ENCODE measurements at regions of chr12 and their contacts with region 1.

Region 1: GRCh38 chr12:112992541-112993398 is 14.5 kb downstream of the OAS2 start:
- DNase-seq: peak; percentile 84
- H3K4me3 Mint-ChIP-seq: no peak overlapping the region
- H3K27ac Mint-ChIP-seq: no peak overlapping the region
- H3K4me1 Mint-ChIP-seq: peaks cover 31% of the 10 kb centered on the region
- H3K27me3 Mint-ChIP-seq: no peaks in the 10 kb centered on the region

Region 2: DNA sequence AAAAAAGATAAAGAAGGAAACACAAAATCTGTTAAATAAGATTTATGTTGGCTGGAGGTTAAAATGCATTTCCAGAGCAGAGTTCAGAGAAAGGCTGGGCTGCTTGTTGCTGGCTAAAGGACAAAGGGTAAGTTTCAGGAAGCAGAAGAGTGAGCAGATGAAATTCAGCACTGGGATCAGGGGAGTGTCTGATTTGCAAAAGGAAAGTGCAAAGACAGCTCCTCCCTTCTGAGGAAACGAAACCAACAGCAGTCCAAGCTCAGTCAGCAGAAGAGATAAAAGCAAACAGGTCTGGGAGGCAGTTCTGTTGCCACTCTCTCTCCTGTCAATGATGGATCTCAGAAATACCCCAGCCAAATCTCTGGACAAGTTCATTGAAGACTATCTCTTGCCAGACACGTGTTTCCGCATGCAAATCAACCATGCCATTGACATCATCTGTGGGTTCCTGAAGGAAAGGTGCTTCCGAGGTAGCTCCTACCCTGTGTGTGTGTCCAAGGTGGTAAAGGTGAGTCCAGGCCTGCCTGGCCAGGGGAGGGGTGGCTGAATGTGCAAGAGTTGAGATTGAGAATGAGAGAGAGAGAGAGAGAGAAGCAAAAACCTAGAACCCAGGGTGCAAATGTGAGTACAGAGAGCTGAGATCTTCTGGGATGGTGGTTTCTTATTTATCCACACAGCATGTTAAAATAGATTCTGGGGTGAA is 85.9 kb before region 1 on chr12 and contains the start of gene OAS1:
- CTCF ChIA-PET with region 1: interaction called, 55 read pairs
- POLR2A ChIA-PET with region 1: interaction called, 5 read pairs
- intact Hi-C with region 1: no loop called
- DNase-seq: peak; percentile 58
- H3K4me3 Mint-ChIP-seq: peak within 1 kb of the TSS; percentile 89
- H3K27ac Mint-ChIP-seq: peak within 1 kb of the TSS; percentile 89
- H3K4me1 Mint-ChIP-seq: peaks cover 58% of the 10 kb centered on the region
- H3K27me3 Mint-ChIP-seq: no peaks in the 10 kb centered on the region
- total RNA-seq, gene OAS1: 46.0 to 49.1 TPM

Region 3: DNA sequence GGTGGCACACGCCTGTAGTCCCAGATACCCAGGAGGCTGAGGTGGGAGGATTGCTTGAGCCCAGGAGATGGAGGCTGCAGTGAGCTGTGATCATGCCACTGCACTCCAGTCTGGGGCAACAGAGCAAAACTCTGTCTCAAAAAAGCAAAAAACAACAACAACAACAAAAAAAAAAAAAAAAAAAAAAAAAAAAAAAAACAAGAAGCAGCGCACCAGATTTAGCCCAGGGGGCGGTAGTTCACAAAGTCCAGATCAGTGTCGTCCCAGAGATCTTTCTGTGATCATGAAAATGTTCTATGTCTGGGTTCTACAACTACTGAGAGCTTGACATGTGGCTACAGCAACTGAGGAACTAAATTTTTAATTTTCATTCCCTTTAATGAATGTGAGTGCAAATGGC is 13.0 kb after region 1 on chr12:
- CTCF ChIA-PET with region 1: interaction called, 73 read pairs
- POLR2A ChIA-PET with region 1: no interaction called
- intact Hi-C with region 1: no loop called
- DNase-seq: no peak
- H3K4me3 Mint-ChIP-seq: no peak overlapping the region
- H3K27ac Mint-ChIP-seq: no peak overlapping the region
- H3K4me1 Mint-ChIP-seq: no peaks in the 10 kb centered on the region
- H3K27me3 Mint-ChIP-seq: no peaks in the 10 kb centered on the region

Region 4: GRCh38 chr12:113048716-113049127 is 56.0 kb after region 1 on chr12:
- CTCF ChIA-PET with region 1: interaction called, 12 read pairs
- POLR2A ChIA-PET with region 1: no interaction called
- intact Hi-C with region 1: no loop called
- DNase-seq: peak; percentile 70
- H3K4me3 Mint-ChIP-seq: no peak overlapping the region
- H3K27ac Mint-ChIP-seq: no peak overlapping the region
- H3K4me1 Mint-ChIP-seq: peaks cover 7% of the 10 kb centered on the region
- H3K27me3 Mint-ChIP-seq: peaks cover 5% of the 10 kb centered on the region

Region 5: GRCh38 chr12:113098446-113098896 is 105.7 kb after region 1 on chr12:
- CTCF ChIA-PET with region 1: interaction called, 32 read pairs
- POLR2A ChIA-PET with region 1: no interaction called
- intact Hi-C with region 1: loop called (anchors 2 kb)
- DNase-seq: peak; percentile 86
- H3K4me3 Mint-ChIP-seq: no peak overlapping the region
- H3K27ac Mint-ChIP-seq: peak overlapping the region; percentile 15
- H3K4me1 Mint-ChIP-seq: peaks cover 18% of the 10 kb centered on the region
- H3K27me3 Mint-ChIP-seq: no peaks in the 10 kb centered on the region

Region 6: DNA sequence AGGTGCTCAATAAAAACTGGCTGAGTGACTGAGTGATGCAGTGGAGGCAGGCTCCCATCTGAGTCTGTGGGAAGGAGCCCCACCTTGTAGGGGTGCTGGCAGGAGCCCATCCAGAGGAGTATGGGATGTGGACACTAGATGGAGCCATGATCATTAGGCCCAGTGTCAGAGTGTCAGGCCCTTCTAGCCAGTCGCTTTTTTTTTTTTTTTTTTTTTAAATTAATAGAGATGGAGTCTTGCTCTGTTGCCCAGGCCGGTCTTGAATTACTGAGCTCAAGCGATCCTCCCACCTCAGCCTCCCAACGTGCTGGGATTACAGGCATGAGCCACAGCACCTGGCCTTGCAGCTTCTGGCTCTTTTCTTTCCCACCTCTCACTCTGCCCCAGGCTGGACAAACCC is 204.2 kb after region 1 on chr12:
- CTCF ChIA-PET with region 1: no interaction called
- POLR2A ChIA-PET with region 1: no interaction called
- intact Hi-C with region 1: no loop called
- DNase-seq: peak; percentile 76
- H3K4me3 Mint-ChIP-seq: no peak overlapping the region
- H3K27ac Mint-ChIP-seq: no peak overlapping the region
- H3K4me1 Mint-ChIP-seq: peaks cover 2% of the 10 kb centered on the region
- H3K27me3 Mint-ChIP-seq: no peaks in the 10 kb centered on the region